ENCODE measurements at regions of chr3 and their contacts with region 1.

Region 1: GRCh38 chr3:32428092-32429068 is 36.7 kb downstream of the CMTM7 start:
- DNase-seq: peak; percentile 49 to 68 (median 53)
- H3K4me3 ChIP-seq: peak overlapping the region; percentile 4 to 21
- H3K4me3 Mint-ChIP-seq: peak overlapping the region; percentile 59 to 88 (median 78)
- H3K27ac ChIP-seq: peak overlapping the region; percentile 64
- H3K27ac Mint-ChIP-seq: peak overlapping the region; percentile 90 to 98 (median 97)
- H3K4me1 ChIP-seq: peaks cover 96% of the 10 kb centered on the region
- H3K4me1 Mint-ChIP-seq: peaks cover 69 to 98% (median 85%) of the 10 kb centered on the region in 4 donors
- H3K27me3 ChIP-seq: no peaks in the 10 kb centered on the region
- H3K27me3 Mint-ChIP-seq: no peaks in the 10 kb centered on the region

Region 2: DNA sequence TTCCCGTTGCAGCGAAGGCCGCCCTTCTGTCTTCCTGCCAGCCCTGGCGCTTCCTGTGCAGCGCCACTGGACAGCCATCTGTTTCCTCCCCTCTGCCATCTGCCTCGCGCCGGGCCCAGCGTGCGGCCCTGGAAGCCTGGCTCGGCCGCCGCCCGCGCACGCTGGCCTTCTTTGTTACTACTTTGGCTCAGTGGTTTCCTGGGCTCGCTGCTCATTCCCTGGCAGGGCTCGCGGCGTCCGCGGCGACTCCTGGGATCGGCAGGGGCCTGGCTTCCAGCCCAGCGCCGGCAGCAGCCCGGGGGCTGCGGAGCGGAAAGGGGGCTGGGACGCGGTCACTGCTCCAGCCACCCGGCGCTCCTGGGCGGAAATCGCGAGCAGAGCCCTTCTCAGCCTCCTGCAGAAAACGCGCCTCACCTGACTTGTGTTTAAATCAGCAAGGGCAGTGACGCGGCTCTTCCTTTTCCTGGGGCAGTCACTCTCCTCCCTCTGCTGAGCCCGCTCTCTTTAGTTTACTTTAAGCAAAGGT is 26.8 kb before region 1 on chr3:
- CTCF ChIA-PET with region 1: interaction called, 4 read pairs
- POLR2A ChIA-PET with region 1: interaction called, 7 read pairs
- intact Hi-C with region 1: loop called (anchors 2 kb)
- DNase-seq: peak; percentile 60 to 75 (median 67)
- H3K4me3 ChIP-seq: peak overlapping the region; percentile 61 to 68
- H3K4me3 Mint-ChIP-seq: peak overlapping the region; percentile 87 to 95 (median 94)
- H3K27ac ChIP-seq: peak overlapping the region; percentile 84
- H3K27ac Mint-ChIP-seq: peak overlapping the region; percentile 95 to 100 (median 99)
- H3K4me1 ChIP-seq: peaks cover 72% of the 10 kb centered on the region
- H3K4me1 Mint-ChIP-seq: peaks cover 53 to 84% (median 69%) of the 10 kb centered on the region in 4 donors
- H3K27me3 ChIP-seq: no peaks in the 10 kb centered on the region
- H3K27me3 Mint-ChIP-seq: no peaks in the 10 kb centered on the region

Region 3: GRCh38 chr3:32414520-32415202 is 13.7 kb before region 1 on chr3:
- CTCF ChIA-PET with region 1: interaction called, 23 read pairs
- POLR2A ChIA-PET with region 1: interaction called, 68 read pairs
- intact Hi-C with region 1: loop called (anchors 1 kb)
- DNase-seq: peak; percentile 61 to 70 (median 65)
- H3K4me3 ChIP-seq: no peak overlapping the region
- H3K4me3 Mint-ChIP-seq: peak overlapping the region; percentile 45 to 73 (median 56)
- H3K27ac ChIP-seq: peak overlapping the region; percentile 58
- H3K27ac Mint-ChIP-seq: peak overlapping the region; percentile 88 to 98 (median 97)
- H3K4me1 ChIP-seq: peaks cover 76% of the 10 kb centered on the region
- H3K4me1 Mint-ChIP-seq: peaks cover 48 to 87% (median 64%) of the 10 kb centered on the region in 4 donors
- H3K27me3 ChIP-seq: no peaks in the 10 kb centered on the region
- H3K27me3 Mint-ChIP-seq: no peaks in the 10 kb centered on the region

Region 4: DNA sequence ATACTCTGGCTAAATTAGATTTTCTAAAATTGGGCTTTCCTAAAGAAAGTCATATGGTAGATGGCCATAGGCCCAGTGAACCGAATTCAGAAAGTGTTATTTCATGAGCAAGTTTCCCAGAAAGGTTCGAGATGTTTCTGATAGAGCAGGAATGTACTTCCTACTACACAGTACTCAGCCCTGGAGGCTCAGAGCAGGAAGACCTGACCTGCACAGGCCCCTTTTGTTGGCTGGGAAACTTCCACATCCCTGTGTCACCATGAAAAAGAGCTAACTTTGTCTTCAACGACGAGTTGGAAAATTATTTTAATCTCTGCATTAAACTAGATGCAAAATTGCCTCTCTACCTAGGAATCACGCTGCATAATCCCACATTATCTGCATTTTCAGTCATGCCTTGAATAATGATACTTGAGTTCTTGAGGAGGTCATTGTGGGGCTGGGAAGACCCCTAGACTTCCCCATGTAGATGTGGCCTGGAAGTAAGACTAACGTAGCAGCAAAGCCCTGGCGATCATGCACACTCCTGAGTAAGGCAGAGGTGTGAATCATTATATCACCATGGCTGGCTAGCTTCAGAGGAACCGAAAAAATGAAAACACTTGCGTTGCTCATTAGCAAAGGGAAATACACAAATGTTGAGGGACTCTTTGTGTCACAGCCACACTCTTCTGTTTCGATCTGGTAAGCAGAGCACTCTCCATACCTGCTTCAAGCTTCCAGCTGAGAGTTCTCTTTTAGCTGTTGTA is 10.4 kb after region 1 on chr3:
- CTCF ChIA-PET with region 1: interaction called, 11 read pairs
- POLR2A ChIA-PET with region 1: interaction called, 68 read pairs
- intact Hi-C with region 1: loop called (anchors 1 kb)
- DNase-seq: peak in 1 of 5 donors; percentile 16
- H3K4me3 ChIP-seq: peak overlapping the region in 1 of 2 donors; percentile 34
- H3K4me3 Mint-ChIP-seq: peak overlapping the region; percentile 8 to 86 (median 70)
- H3K27ac ChIP-seq: peak overlapping the region; percentile 17
- H3K27ac Mint-ChIP-seq: peak overlapping the region; percentile 68 to 94 (median 85)
- H3K4me1 ChIP-seq: peaks cover 79% of the 10 kb centered on the region
- H3K4me1 Mint-ChIP-seq: peaks cover 53 to 91% (median 64%) of the 10 kb centered on the region in 4 donors
- H3K27me3 ChIP-seq: no peaks in the 10 kb centered on the region
- H3K27me3 Mint-ChIP-seq: no peaks in the 10 kb centered on the region

Region 5: DNA sequence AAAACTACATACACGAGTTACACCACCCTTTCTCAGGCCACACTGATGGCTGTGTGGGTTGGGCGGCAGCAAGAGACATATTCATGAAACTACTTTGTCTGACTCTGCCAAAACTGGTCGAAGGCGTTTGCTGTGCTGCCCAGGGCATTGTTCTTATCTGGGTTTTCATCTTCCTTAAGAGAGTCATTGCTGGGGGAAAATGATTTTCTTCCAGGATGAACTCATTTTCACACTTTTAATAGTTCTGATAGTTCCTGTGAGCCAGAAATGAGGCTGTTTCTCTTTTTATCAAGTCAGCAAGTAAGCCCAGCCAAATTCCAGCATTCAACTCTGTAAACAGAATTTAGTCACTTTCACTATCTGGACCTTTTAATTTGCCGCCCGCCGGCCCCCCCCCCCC is 437.0 kb after region 1 on chr3:
- CTCF ChIA-PET with region 1: no interaction called
- POLR2A ChIA-PET with region 1: no interaction called
- intact Hi-C with region 1: no loop called
- DNase-seq: no peak
- H3K4me3 ChIP-seq: no peak overlapping the region
- H3K4me3 Mint-ChIP-seq: no peak overlapping the region
- H3K27ac ChIP-seq: no peak overlapping the region
- H3K27ac Mint-ChIP-seq: no peak overlapping the region
- H3K4me1 ChIP-seq: no peaks in the 10 kb centered on the region
- H3K4me1 Mint-ChIP-seq: no peaks in the 10 kb centered on the region
- H3K27me3 ChIP-seq: no peaks in the 10 kb centered on the region
- H3K27me3 Mint-ChIP-seq: peaks cover 0 to 6% of the 10 kb centered on the region in 2 donors